PC-3 (cell line): ENCODE measurements at regions of chr1 and their contacts with region 1.

Region 1: GRCh38 chr1:101238681-101239094 is 1.9 kb downstream of the S1PR1 start:
- DNase-seq: peak; percentile 92
- ATAC-seq: peak; percentile 62
- H3K4me3 ChIP-seq: peak overlapping the region; percentile 62
- H3K27ac ChIP-seq: no peak overlapping the region
- H3K4me1 ChIP-seq: peaks cover 9% of the 10 kb centered on the region; the same call in 1 of the 2 replicates
- H3K27me3 ChIP-seq: no peaks in the 10 kb centered on the region
- CTCF ChIP-seq: peak; percentile 95

Region 2: GRCh38 chr1:100921109-100921706 is 317.5 kb before region 1 on chr1:
- CTCF ChIA-PET with region 1: interaction called, 3 read pairs
- POLR2A ChIA-PET with region 1: no interaction called
- intact Hi-C with region 1: loop called (anchors 1 kb)
- DNase-seq: peak; percentile 79
- ATAC-seq: no peak
- H3K4me3 ChIP-seq: no peak overlapping the region
- H3K27ac ChIP-seq: no peak overlapping the region
- H3K4me1 ChIP-seq: peaks cover 7% of the 10 kb centered on the region; the same call in 1 of the 2 replicates
- H3K27me3 ChIP-seq: no peaks in the 10 kb centered on the region
- CTCF ChIP-seq: peak; percentile 67

Region 3: DNA sequence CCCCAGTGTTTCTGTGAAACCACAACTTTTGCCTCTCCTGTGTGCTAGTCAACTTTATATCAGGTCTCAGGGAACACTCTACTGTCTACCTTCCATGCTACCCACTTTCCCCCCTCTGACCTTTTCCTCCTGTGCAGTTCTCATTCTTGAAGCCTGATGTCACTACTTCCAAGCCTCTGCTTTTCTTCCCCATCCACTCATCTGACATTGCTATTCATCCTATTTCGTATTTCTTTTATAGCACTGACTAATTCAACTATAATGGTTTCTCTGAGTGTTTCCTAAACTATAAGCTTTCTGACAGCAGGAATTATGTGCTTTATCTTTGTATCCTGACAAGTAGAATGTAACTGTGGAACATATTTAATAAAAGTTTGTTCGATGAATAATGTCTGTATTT is 194.9 kb before region 1 on chr1:
- CTCF ChIA-PET with region 1: no interaction called
- POLR2A ChIA-PET with region 1: no interaction called
- intact Hi-C with region 1: loop called (anchors 1 kb)
- DNase-seq: peak; percentile 25
- ATAC-seq: peak; percentile 85
- H3K4me3 ChIP-seq: no peak overlapping the region
- H3K27ac ChIP-seq: no peak overlapping the region
- H3K4me1 ChIP-seq: peaks cover 5% of the 10 kb centered on the region
- H3K27me3 ChIP-seq: no peaks in the 10 kb centered on the region
- CTCF ChIP-seq: peak; percentile 35; the same call in 1 of the 2 replicates

Region 4: GRCh38 chr1:101150670-101151069 is 88.0 kb before region 1 on chr1:
- CTCF ChIA-PET with region 1: interaction called, 8 read pairs
- POLR2A ChIA-PET with region 1: no interaction called
- intact Hi-C with region 1: loop called (anchors 5 kb)
- DNase-seq: peak; percentile 84
- ATAC-seq: peak; percentile 81
- H3K4me3 ChIP-seq: no peak overlapping the region
- H3K27ac ChIP-seq: peak overlapping the region; percentile 24; the same call in 1 of the 2 replicates
- H3K4me1 ChIP-seq: peaks cover 26% of the 10 kb centered on the region
- H3K27me3 ChIP-seq: no peaks in the 10 kb centered on the region
- CTCF ChIP-seq: no peak

Region 5: GRCh38 chr1:101188331-101188730 is 50.4 kb before region 1 on chr1:
- CTCF ChIA-PET with region 1: interaction called, 12 read pairs
- POLR2A ChIA-PET with region 1: no interaction called
- intact Hi-C with region 1: no loop called
- DNase-seq: peak; percentile 24
- ATAC-seq: no peak
- H3K4me3 ChIP-seq: no peak overlapping the region
- H3K27ac ChIP-seq: no peak overlapping the region
- H3K4me1 ChIP-seq: peaks cover 11% of the 10 kb centered on the region
- H3K27me3 ChIP-seq: no peaks in the 10 kb centered on the region
- CTCF ChIP-seq: no peak

Region 6: GRCh38 chr1:101288491-101288944 is 49.8 kb after region 1 on chr1:
- CTCF ChIA-PET with region 1: interaction called, 19 read pairs
- POLR2A ChIA-PET with region 1: interaction called, 5 read pairs
- intact Hi-C with region 1: loop called (anchors 1 kb)
- DNase-seq: peak; percentile 97
- ATAC-seq: peak; percentile 93
- H3K4me3 ChIP-seq: no peak overlapping the region
- H3K27ac ChIP-seq: no peak overlapping the region
- H3K4me1 ChIP-seq: peaks cover 30% of the 10 kb centered on the region
- H3K27me3 ChIP-seq: no peaks in the 10 kb centered on the region
- CTCF ChIP-seq: peak; percentile 95